ENCODE measurements at regions of chrX and their contacts with region 1.

Region 1: GRCh38 chrX:136028251-136028984 is 43.2 kb downstream of the SLC9A6 start:
- DNase-seq: no peak
- H3K4me3 ChIP-seq: no peak overlapping the region
- H3K27ac ChIP-seq: no peak overlapping the region
- H3K4me1 ChIP-seq: no peaks in the 10 kb centered on the region
- H3K27me3 ChIP-seq: no peaks in the 10 kb centered on the region
- CTCF ChIP-seq: peak; percentile 18 to 63 (median 40)
- EP300 ChIP-seq: no peak
- POLR2A ChIP-seq: no peak

Region 2: DNA sequence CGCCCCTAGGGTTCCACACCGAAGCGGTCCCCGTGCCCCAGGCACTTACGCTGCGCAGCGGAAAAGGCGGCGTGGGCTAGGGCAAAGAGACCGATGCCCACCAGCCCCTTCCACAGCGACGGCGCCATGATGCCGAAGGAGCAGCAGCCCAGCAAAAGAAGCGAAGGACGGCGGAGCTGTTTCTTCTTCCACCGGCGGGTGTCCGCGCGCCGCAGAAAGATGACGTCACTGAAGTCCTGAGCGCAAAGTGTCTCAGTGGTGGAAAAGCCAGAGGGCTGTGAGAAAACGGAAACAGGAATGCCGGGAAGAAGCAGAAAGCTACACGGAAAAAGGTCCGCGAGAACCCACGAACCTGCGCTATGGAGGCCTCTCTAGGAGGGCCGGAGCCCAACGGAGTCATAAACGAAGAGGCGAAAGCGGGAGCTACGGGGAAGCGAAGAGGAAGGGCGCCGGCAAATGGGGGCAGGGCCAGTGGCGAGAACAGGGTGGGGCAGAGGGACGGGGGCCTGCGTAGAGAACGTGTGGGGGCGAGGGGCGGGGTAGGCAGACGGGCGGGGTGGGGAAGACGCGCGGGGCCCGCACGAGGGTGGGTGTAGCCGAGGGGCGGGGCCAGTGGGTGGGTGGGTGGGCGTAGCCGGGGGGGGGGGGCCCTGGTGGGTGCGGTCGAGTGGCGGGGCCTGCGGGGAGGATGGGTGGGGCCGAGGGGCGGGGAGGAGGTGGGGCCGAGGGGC is 54.7 kb before region 1 on chrX and contains the start of gene MMGT1:
- intact Hi-C with region 1: no loop called
- DNase-seq: peak; percentile 84 to 88 (median 85)
- H3K4me3 ChIP-seq: peak within 1 kb of the TSS; percentile 66
- H3K27ac ChIP-seq: peak within 1 kb of the TSS; percentile 47 to 77
- H3K4me1 ChIP-seq: no peaks in the 10 kb centered on the region
- H3K27me3 ChIP-seq: no peaks in the 10 kb centered on the region
- CTCF ChIP-seq: peak in 2 of 3 donors; percentile 10 to 18
- EP300 ChIP-seq: peak; percentile 31
- POLR2A ChIP-seq: peak; percentile 56
- total RNA-seq, gene MMGT1: 19.1 to 27.1 (median 23.6) TPM

Region 3: DNA sequence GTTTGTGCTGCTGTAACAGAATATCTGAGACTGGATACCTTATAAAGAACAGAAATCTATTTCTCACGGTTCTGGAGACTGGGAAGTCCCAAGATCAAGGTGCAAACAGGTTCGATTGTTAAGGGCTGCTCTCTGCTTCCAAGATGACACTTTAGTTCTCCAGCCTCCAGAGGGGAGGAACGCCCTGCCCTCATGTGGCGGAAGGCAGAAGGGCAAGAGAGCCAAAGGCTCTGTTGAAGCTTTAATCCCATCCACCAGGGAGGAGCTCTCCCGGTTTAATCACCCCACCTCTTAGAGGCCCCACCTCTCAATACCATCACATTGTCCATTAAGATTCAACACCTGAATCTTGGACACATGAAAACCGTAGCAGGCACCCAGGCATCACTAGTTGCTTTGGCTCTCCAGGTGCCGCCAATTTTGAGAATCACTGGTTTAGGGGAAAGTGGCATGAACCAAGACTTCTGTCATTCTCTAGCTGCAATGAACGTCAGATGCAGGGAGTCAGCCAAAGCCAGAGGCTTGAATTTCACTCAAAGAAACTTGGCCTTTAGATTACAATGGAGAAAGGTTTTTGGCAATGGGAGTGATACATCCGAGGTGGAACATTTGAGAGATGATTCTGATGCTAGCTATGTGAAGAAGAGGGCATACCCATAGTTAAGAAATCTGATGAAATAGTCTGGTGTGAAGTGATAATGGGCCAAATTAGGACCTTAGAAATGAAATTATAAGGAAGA is 134.6 kb after region 1 on chrX:
- intact Hi-C with region 1: loop called in 2 of 4 experiments (anchors 10 kb)
- DNase-seq: peak in 3 of 5 donors; percentile 31 to 61 (median 61)
- H3K4me3 ChIP-seq: no peak overlapping the region
- H3K27ac ChIP-seq: no peak overlapping the region
- H3K4me1 ChIP-seq: peaks cover 2% of the 10 kb centered on the region
- H3K27me3 ChIP-seq: no peaks in the 10 kb centered on the region
- CTCF ChIP-seq: no peak
- EP300 ChIP-seq: no peak
- POLR2A ChIP-seq: no peak

Region 4: DNA sequence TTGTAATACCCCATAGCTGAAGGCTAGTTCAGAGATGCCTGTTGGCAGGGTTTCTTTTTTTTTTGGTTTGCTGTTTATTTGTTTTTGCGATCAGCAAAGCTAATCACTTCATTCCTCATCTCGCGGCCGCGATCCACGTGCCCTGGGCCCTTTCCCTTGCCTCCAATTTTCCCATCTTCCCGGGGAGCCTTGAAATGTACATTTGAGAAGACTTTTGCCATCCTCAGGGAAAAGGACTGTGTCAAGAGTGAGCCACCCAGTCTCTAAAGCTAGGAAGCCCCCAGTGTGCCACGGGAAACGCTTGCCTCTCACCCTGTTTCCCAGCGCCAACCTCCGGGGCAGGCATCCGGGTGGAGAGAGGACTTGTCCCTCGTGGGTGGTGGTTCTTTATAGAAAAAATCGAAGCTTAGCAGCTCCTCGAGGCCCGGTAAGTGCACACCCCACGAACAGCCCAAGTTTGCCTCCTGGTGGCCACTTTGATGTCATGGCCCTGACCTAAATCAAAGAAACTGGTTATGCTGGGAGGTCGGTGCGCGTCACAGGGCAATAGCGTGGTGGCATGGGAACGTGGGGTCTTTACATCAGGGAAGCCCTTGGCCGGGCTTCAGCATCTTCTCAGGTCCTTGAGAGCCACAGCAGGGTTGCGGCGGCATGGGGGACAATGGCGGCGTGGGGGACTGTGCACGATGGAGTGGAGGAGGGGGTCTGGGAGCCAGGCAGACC is 180.8 kb after region 1 on chrX:
- intact Hi-C with region 1: loop called in 1 of 4 experiments (anchors 10 kb)
- DNase-seq: peak; percentile 46 to 71 (median 67)
- H3K4me3 ChIP-seq: no peak overlapping the region
- H3K27ac ChIP-seq: peak overlapping the region in 1 of 2 donors; percentile 14
- H3K4me1 ChIP-seq: no peaks in the 10 kb centered on the region
- H3K27me3 ChIP-seq: no peaks in the 10 kb centered on the region
- CTCF ChIP-seq: peak; percentile 20 to 60 (median 56)
- EP300 ChIP-seq: no peak
- POLR2A ChIP-seq: no peak

Region 5: DNA sequence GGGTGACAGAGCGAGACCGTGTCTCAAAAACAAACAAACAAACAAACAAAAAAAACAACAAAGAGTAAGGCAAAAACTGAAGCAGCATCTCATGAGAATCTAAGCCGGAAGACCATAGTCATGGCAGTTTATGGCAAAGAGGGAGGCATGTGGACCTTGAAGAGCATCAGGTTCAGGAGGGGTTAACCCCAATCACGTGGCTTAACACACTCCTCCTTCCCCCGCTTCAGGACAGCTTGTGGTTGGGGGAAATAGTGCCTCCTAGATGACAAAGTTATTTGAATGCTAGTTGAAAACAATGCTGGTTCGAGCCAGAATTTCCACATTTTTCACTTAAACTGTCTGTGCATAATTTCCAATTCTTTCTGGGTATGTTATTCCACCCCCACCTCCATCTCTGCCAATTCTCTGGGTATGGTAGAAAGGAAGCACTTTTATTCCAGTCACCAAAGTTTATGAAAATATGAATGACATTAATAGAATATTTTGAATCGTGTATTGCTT is 234.4 kb after region 1 on chrX:
- intact Hi-C with region 1: loop called in 2 of 4 experiments (anchors 2 to 5 kb)
- DNase-seq: no peak
- H3K4me3 ChIP-seq: no peak overlapping the region
- H3K27ac ChIP-seq: peak overlapping the region in 1 of 2 donors; percentile 18
- H3K4me1 ChIP-seq: peaks cover 7% of the 10 kb centered on the region
- H3K27me3 ChIP-seq: no peaks in the 10 kb centered on the region
- CTCF ChIP-seq: no peak
- EP300 ChIP-seq: no peak
- POLR2A ChIP-seq: no peak

Region 6: DNA sequence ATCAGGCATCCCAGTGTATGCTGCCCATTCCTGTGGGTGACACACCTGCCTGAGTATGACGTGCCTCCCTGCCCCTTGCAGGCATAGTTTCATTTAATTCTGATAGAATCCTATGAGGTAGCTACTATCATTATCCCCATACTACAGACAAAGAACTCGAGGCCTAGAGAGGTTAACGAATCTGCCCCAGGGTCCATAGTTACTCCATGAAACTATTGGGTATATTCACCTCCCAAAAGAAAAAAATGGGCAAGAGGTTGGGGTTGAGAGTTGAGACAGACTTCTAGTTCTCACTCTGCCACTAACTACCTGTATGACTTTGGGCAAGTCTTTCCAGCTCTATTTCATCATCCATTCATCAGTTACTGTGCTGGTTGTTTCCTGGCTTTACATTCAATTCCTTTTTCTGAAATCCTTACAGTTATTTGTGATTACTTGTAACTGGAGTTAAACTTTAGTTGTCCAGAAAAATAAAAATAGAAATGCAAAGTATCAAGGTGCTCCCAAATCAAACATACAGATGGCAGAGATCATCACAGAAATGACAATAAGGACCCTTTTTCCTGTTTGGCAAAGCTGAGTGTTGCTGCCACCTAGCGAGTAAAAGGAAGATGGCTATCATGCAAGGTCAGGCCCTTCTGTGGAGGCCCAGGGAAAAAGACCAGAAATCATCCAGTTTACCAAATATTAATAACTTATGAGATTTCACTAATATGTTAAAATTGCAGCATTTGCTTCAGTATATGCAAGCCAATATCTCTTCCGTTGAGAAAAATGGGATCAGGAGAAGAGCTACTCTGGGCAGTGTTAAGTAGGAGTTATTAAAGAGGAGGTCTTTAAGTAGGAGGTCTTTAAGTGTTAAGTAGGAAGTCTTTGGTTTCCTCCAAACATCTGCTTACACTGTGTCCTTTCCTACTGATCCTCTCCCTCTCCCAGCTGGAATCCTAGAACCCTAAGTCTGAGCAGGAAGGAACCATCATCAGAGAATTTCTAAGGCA is 239.9 kb after region 1 on chrX:
- intact Hi-C with region 1: loop called in 2 of 4 experiments (anchors 2 to 5 kb)
- DNase-seq: peak in 2 of 5 donors; percentile 32 to 50
- H3K4me3 ChIP-seq: no peak overlapping the region
- H3K27ac ChIP-seq: no peak overlapping the region
- H3K4me1 ChIP-seq: no peaks in the 10 kb centered on the region
- H3K27me3 ChIP-seq: no peaks in the 10 kb centered on the region
- CTCF ChIP-seq: peak; percentile 25 to 44 (median 25)
- EP300 ChIP-seq: no peak
- POLR2A ChIP-seq: no peak

Region 7: GRCh38 chrX:136496770-136497598 is 468.6 kb after region 1 on chrX and contains the start of gene HTATSF1:
- intact Hi-C with region 1: loop called in 1 of 4 experiments (anchors 10 kb)
- DNase-seq: peak; percentile 83 to 89 (median 86)
- H3K4me3 ChIP-seq: peak within 1 kb of the TSS; percentile 61
- H3K27ac ChIP-seq: peak within 1 kb of the TSS; percentile 82 to 95
- H3K4me1 ChIP-seq: no peaks in the 10 kb centered on the region
- H3K27me3 ChIP-seq: no peaks in the 10 kb centered on the region
- CTCF ChIP-seq: no peak
- EP300 ChIP-seq: no peak
- POLR2A ChIP-seq: peak; percentile 45
- total RNA-seq, gene HTATSF1: 44.2 to 72.3 (median 58.8) TPM

Measured in ovary (tissue), 10 donors.